Activated T-helper 2 cell treated with anti-CD3 and anti-CD28 coated beads, Interferon-gamma antibody, Interleukin-2, Interleukin-4, amounts not matched to agents 10 μg/mL and 5 μg/mL and 100 μg/mL, durations not matched to agents 14 hours and 24 hours and 36 hours (primary cell): ENCODE measurements at regions of chr16 and their contacts with region 1.

Region 1: DNA sequence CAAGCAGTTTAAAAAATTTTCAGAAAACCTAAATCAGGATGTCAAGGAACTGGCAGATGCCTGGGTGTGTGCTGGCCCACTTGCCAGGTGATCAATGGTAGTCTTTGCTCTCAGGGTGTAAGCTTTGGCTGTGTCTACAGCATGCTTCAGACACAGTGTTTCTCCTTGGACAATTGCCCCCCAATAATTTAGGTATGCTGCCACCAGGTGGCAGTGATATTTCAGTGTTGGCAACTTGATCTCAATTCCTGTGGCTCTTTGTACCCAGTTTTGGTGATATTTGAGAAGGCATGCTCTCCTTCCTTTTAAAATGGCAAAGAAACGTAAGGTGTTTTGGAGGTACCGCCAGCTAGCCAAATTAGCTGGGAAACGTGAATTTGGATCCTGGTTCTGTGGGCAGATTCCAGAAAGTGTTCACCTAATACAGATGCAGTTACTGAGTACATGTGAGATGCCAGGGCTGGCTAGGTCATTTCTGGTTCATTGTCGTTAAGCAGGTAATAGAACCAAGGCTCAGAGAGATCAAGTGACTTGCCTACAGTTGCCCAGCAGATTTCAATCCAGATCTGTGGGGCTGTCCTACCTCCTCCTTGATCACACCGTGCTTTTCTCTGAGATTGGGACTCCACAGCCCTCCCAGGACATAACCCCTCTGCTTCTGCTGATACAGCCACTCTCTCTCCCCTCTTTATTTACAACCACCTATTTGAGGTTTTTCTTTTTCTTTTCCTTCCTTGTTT is 155.6 kb upstream of the PLCG2 start:
- DNase-seq: peak; percentile 40
- H3K4me3 Mint-ChIP-seq: no peak overlapping the region
- H3K27ac Mint-ChIP-seq: peak overlapping the region; percentile 72
- H3K4me1 Mint-ChIP-seq: peaks cover 17% of the 10 kb centered on the region
- H3K27me3 Mint-ChIP-seq: no peaks in the 10 kb centered on the region

Region 2: DNA sequence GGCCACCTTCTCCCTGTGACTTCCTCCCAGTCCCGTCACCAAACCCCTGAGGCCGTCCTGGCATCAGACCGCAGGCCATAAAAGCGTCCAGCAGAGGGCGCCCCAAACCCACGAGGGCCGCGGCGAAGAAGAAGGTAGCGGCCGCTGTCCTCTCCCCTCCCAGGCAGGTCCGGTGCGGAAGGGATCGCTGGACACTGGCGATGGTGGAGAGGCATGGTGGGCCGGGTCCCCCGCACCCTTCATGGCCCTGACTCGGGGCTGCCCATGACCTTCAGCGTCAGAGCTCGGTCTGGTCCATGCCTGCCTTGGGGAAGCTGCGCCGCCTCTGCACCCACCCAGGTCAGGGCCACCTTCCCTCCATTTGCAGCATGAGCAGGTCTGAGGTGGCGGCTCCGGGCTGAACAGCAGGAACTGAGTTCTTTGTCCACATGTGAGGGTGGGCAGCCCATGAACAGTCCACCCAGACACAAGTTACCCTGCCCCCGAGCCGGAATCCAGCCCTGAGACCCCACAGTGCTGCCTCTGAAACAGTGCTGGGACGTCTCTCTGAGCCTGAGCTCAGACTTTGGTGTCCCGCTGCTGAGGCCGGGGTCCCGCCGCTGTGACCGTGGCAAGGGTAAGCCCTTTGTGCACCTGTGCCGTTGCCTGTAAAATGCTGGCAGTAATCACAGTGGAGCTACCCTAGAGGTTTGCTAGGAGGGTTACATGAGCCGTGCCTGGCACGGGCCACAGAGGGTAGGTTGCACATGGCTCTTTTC is 219.7 kb before region 1 on chr16:
- intact Hi-C with region 1: loop called (anchors 1 kb)
- DNase-seq: peak; percentile 71
- H3K4me3 Mint-ChIP-seq: no peak overlapping the region
- H3K27ac Mint-ChIP-seq: no peak overlapping the region
- H3K4me1 Mint-ChIP-seq: peaks cover 2% of the 10 kb centered on the region
- H3K27me3 Mint-ChIP-seq: peaks cover 8% of the 10 kb centered on the region

Region 3: DNA sequence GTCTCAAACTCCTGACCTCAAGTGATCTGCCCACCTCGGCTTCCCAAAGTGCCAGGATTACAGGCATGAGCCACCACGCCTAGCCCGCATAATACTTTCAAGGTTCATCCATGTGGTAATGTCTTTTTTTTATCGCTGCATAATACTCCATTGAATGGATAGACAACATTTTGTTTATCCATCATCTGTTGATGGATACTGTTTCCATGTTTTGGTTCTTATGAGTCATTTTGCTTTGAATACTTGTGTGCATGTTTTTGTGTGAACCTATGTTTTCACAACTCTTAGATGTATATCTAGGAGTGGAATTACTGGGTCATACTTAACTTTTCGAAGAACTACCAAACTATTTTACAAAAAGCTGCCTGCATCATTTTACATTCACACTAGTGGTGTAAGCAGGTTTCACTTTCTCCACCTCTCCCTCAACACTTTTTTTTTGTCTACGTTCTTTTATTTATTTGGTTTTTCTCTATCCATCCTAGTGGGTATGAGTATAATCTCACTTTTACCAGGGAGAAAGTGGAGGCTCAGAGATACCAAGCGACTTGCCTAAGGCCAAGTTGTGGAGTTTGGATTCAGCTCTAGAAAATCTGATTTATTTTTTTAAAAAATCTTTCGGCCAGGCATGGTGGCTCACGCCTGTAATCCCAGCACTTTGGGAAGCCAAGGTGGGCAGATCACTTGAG is 27.8 kb before region 1 on chr16:
- intact Hi-C with region 1: loop called (anchors 1 kb)
- DNase-seq: no peak
- H3K4me3 Mint-ChIP-seq: no peak overlapping the region
- H3K27ac Mint-ChIP-seq: peak overlapping the region; percentile 91
- H3K4me1 Mint-ChIP-seq: peaks cover 30% of the 10 kb centered on the region
- H3K27me3 Mint-ChIP-seq: no peaks in the 10 kb centered on the region

Region 4: GRCh38 chr16:81650982-81651562 is 27.5 kb after region 1 on chr16:
- intact Hi-C with region 1: no loop called
- DNase-seq: no peak
- H3K4me3 Mint-ChIP-seq: no peak overlapping the region
- H3K27ac Mint-ChIP-seq: no peak overlapping the region
- H3K4me1 Mint-ChIP-seq: peaks cover 10% of the 10 kb centered on the region
- H3K27me3 Mint-ChIP-seq: no peaks in the 10 kb centered on the region

Region 5: DNA sequence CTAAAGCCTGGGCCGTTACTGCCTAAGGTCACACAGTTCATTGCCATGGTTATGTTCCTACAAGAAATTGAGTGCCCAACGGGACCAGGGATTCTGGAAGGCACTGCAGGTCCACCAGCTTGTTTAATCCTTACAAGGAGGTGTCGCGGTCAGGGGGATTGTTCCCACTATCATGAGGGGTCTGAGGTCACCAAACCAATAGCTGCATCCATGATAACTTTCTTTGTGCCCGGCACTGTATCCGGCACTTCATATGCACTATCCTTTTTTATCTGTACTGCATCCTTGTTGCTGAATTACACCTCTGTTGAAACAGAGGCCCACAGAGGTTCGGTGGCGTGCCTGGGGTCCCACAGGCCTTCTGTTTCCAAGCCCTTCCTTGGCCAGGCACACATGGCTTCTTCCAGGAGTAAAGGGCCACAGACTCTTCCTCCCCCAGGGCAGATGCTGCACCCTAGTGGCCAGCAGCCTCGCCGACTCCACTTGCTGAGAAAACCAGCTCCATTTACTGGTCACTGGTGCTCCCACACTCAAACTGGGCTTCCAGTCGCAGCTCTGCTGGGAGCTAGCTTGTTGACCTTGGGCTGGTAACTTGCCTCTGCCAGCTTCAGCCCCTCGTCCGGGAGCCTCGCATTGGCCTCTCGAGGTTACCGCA is 73.6 kb after region 1 on chr16:
- intact Hi-C with region 1: loop called (anchors 1 kb)
- DNase-seq: peak; percentile 37
- H3K4me3 Mint-ChIP-seq: no peak overlapping the region
- H3K27ac Mint-ChIP-seq: peak overlapping the region; percentile 63
- H3K4me1 Mint-ChIP-seq: peaks cover 13% of the 10 kb centered on the region
- H3K27me3 Mint-ChIP-seq: no peaks in the 10 kb centered on the region

Region 6: GRCh38 chr16:81723098-81723723 is 99.7 kb after region 1 on chr16:
- intact Hi-C with region 1: loop called (anchors 1 kb)
- DNase-seq: peak; percentile 23
- H3K4me3 Mint-ChIP-seq: no peak overlapping the region
- H3K27ac Mint-ChIP-seq: no peak overlapping the region
- H3K4me1 Mint-ChIP-seq: peaks cover 6% of the 10 kb centered on the region
- H3K27me3 Mint-ChIP-seq: peaks cover 4% of the 10 kb centered on the region

Region 7: GRCh38 chr16:81737885-81738786 is 114.6 kb after region 1 on chr16:
- intact Hi-C with region 1: loop called (anchors 5 kb)
- DNase-seq: peak; percentile 75
- H3K4me3 Mint-ChIP-seq: peak overlapping the region; percentile 24
- H3K27ac Mint-ChIP-seq: no peak overlapping the region
- H3K4me1 Mint-ChIP-seq: peaks cover 11% of the 10 kb centered on the region
- H3K27me3 Mint-ChIP-seq: peaks cover 4% of the 10 kb centered on the region

Region 8: DNA sequence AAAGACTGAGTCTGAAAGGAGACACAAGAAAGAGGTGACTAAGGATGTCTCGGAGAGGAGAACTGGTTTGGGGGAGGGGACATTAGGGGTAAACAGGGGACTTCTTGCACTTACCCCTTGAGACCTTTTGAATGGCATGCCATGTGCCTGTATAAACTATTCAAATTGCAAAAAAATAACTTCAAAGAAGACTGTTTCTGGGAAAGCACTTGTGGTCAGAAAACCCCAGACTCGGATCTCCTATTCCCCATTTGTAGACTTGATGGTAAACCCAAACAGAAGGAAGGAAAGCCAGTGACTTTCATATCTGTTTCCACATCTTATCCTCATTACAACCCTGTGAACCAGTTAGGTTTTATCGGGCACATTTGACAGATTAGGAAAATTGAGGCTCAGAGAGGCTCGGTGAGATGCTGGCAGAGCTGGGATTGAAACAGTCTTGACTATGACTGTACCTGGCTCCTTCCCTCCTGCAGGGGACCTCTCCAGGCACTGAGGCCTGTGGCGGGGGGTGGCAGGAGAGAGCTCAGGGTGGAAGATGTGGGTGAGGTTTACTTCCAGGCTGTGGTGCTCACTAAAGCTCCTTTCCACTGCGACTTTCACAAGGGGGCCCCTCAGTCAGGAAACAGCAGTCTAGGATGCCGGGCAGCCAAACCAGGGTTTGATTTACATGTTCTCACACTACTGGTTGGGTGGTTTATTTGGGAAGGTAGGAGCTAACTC is 125.1 kb after region 1 on chr16:
- intact Hi-C with region 1: no loop called
- DNase-seq: no peak
- H3K4me3 Mint-ChIP-seq: no peak overlapping the region
- H3K27ac Mint-ChIP-seq: no peak overlapping the region
- H3K4me1 Mint-ChIP-seq: peaks cover 14% of the 10 kb centered on the region
- H3K27me3 Mint-ChIP-seq: peaks cover 6% of the 10 kb centered on the region